MCF 10A (cell line): ENCODE measurements at regions of chr16 and their contacts with region 1.

Region 1: GRCh38 chr16:14475370-14476139 is 154.5 kb downstream of the PARN start:
- DNase-seq: peak; percentile 36
- H3K4me3 Mint-ChIP-seq: no peak overlapping the region
- H3K27ac Mint-ChIP-seq: peak overlapping the region; percentile 8
- H3K4me1 Mint-ChIP-seq: peaks cover 13% of the 10 kb centered on the region
- H3K27me3 Mint-ChIP-seq: no peaks in the 10 kb centered on the region
- CTCF ChIP-seq: no peak

Region 2: GRCh38 chr16:14486520-14487303 is 11.2 kb after region 1 on chr16:
- CTCF ChIA-PET with region 1: interaction called, 4 read pairs
- POLR2A ChIA-PET with region 1: interaction called, 11 read pairs
- intact Hi-C with region 1: no loop called
- DNase-seq: peak; percentile 96
- H3K4me3 Mint-ChIP-seq: peak overlapping the region; percentile 68
- H3K27ac Mint-ChIP-seq: peak overlapping the region; percentile 67
- H3K4me1 Mint-ChIP-seq: peaks cover 11% of the 10 kb centered on the region
- H3K27me3 Mint-ChIP-seq: no peaks in the 10 kb centered on the region
- CTCF ChIP-seq: no peak